Ascending aorta (tissue), 2 donors: ENCODE measurements at regions of chr13 and their contacts with region 1.

Region 1: DNA sequence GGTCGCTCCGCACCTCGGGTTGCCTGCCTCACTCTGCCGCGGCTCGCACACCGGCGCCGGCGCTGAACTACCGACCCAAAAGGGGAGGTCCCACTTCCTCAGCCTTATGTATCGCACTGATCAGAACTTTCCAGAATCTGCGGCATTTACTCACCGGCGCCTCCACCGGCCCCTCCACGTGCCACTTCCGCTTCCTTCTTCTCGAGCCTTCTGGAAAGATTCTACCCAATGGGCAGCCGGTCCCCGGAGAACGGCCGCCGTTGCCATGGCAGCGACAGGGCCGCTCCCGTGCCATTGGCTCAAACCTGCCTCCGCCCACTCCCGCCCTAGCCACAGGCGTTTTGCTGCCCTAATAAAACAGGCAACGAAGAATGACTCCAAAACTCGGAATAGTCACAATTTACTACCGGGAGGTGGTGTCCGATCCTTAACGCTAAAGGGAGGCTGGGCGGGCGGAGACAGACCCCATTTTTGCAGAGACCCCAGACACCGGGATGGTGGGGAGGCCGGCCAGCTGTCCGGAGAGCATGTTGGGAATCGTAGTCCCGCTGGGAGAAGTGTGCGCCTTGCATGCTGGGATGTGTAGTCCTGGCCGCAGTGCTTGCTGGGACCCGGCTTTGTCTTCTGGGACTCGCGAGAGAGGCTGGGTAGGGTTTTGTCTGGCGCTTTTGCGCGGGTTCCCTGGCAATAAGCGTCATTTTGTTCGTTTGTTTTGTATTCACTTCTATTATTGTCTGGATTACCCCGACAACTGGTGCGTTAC is at the start of gene HSPH1:
- DNase-seq: peak; percentile 95 to 99
- H3K4me3 ChIP-seq: peak within 1 kb of the TSS; percentile 80 to 91
- H3K27ac ChIP-seq: peak within 1 kb of the TSS; percentile 94 to 95
- H3K4me1 ChIP-seq: peaks cover 0 to 10% of the 10 kb centered on the region in 2 donors
- H3K27me3 ChIP-seq: no peaks in the 10 kb centered on the region
- CTCF ChIP-seq: peak in 2 of 3 experiments; percentile 24 to 26
- total RNA-seq, gene HSPH1: 20.6 TPM

Region 2: DNA sequence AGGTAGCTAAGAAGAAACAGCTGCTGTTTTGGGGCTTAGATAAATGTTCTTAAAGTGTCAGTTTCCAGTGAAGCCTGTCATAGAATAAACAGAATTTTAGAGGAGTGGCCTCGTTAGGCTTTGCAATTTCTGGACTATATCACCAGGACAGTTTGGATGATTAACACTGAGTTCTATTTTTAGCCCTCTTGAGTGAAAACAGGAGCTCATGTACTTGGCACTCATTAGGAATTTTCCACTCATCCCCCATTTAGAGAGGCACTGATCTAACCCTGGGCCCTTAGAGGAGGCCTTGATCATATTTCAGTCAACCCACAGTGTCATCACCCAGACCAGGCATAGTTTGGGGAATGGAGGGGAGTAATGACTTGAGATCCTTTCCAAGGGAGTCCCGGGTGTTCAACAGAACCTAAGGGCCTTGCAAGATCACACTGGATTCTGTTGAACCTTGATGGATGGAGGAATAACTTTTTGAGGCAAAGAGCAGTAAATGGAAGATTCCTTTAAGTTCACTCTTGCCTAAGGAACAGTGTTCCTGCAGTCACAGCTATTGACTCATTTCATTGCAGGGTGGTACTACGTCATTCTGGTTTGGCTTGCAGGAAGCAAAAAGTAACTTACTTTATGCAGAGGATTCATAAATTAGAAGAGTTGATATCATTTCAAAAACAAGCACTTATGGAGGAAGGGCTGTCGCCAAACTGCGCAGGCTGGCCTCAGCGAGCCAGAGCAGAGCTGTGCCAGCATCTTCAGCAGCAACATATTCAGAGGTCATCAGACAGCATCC is 1726.7 kb before region 1 on chr13:
- intact Hi-C with region 1: loop called (anchors 5 kb)
- DNase-seq: peak in 1 of 2 donors; percentile 63
- H3K4me3 ChIP-seq: no peak overlapping the region
- H3K27ac ChIP-seq: peak overlapping the region; percentile 88 to 90
- H3K4me1 ChIP-seq: peaks cover 22 to 59% of the 10 kb centered on the region in 2 donors
- H3K27me3 ChIP-seq: no peaks in the 10 kb centered on the region
- CTCF ChIP-seq: no peak

Region 3: DNA sequence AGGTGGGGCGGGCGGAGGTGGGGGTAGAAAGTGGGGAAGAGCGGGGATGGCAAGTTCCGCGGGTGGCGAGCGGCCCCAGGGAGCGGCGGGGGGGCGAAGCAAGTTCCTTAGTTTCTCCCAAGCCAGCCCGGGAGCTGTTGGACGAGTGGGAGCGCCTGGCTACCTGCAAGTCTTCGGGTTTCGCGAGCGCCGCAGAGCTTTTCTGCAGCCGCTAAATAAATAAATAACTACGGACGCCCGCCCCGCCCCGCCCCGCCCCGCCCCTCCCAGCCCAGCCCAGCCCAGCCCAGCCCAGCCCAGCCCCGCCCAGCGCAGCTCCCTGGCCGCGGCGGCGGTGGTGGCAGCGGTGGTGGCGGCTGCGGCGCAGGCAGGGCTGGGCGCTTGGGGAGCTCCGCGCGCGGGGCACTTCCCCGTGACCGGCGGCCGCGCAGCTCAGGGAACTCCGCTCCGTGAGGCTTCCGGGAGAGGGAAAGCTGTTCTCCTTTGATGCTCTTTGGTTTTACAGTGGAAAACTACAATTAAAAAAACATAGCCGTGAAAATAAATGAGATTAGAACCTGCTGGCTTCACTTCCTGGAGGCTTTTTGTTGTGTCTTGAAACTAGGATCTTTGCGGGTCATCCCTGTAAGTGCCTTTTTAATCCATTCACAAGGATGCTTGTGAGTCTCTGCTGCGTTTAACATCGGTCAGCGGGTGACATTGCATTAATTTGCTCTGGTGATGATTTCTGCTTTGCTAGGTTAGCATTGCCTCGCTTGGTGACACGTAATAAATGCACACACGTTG is 739.8 kb before region 1 on chr13 and contains the start of gene UBE2L5:
- intact Hi-C with region 1: loop called (anchors 2 kb)
- DNase-seq: peak; percentile 10 to 87
- H3K4me3 ChIP-seq: peak within 1 kb of the TSS; percentile 73 to 75
- H3K27ac ChIP-seq: peak within 1 kb of the TSS; percentile 95 to 98
- H3K4me1 ChIP-seq: peaks cover 8 to 12% of the 10 kb centered on the region in 2 donors
- H3K27me3 ChIP-seq: no peaks in the 10 kb centered on the region
- CTCF ChIP-seq: no peak
- total RNA-seq, gene UBE2L5: not detected

Region 4: GRCh38 chr13:30629527-30629926 is 532.5 kb before region 1 on chr13:
- intact Hi-C with region 1: no loop called
- DNase-seq: no peak
- H3K4me3 ChIP-seq: no peak overlapping the region
- H3K27ac ChIP-seq: no peak overlapping the region
- H3K4me1 ChIP-seq: peaks cover 0 to 4% of the 10 kb centered on the region in 2 donors
- H3K27me3 ChIP-seq: no peaks in the 10 kb centered on the region
- CTCF ChIP-seq: no peak

Region 5: GRCh38 chr13:30898678-30899241 is 263.2 kb before region 1 on chr13:
- intact Hi-C with region 1: loop called (anchors 5 kb)
- DNase-seq: peak; percentile 54 to 94
- H3K4me3 ChIP-seq: peak overlapping the region in 1 of 2 donors; percentile 42
- H3K27ac ChIP-seq: peak overlapping the region; percentile 98 to 99
- H3K4me1 ChIP-seq: peaks cover 24 to 52% of the 10 kb centered on the region in 2 donors
- H3K27me3 ChIP-seq: no peaks in the 10 kb centered on the region
- CTCF ChIP-seq: peak in 1 of 3 experiments; percentile 12

Region 6: DNA sequence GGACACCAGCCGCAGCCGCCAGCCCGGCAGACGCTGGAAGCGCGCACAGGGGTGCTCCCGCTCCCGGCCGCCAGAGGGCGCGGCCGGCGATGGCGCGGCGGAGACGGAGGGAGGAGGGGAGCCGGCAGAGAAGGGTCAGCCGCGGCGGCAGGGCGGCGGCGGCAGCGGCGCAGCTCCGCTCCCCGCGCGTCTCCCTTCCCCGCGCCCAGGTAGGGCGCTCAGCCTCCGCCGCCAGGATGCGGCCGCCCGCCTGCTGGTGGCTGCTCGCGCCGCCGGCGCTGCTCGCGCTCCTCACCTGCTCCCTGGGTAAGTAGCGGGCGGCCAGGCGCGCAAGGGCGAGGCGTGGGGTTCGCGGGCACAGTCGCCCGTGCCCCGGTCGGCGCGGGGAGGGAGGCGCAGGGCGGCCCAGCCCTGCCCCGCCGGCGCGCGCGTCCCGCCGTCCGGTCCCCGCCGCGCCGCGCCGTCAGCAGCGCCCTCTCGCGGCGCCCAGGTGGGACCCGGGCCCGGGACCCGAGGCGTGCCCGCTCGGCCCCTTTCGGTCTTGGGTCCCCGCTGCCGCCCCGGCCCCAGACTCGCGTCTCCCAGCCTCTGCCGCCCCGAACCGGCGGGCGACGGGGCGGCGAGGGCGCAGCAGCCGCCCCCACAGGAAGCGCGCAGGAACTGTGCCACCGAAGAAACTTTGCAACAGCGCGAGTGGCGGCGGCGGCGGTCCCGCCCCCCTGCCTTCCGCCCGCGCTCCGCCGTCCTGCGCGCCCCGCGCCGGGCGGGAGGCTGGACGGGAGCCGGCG is 38.0 kb after region 1 on chr13 and contains the start of gene B3GLCT:
- intact Hi-C with region 1: loop called (anchors 1 kb)
- DNase-seq: peak in 1 of 2 donors; percentile 88
- H3K4me3 ChIP-seq: peak within 1 kb of the TSS; percentile 88 to 97
- H3K27ac ChIP-seq: peak within 1 kb of the TSS; percentile 88 to 100
- H3K4me1 ChIP-seq: peaks cover 5 to 15% of the 10 kb centered on the region in 2 donors
- H3K27me3 ChIP-seq: no peaks in the 10 kb centered on the region
- CTCF ChIP-seq: peak; percentile 58 to 96 (median 77)
- total RNA-seq, gene B3GLCT: 8.8 TPM

Region 7: DNA sequence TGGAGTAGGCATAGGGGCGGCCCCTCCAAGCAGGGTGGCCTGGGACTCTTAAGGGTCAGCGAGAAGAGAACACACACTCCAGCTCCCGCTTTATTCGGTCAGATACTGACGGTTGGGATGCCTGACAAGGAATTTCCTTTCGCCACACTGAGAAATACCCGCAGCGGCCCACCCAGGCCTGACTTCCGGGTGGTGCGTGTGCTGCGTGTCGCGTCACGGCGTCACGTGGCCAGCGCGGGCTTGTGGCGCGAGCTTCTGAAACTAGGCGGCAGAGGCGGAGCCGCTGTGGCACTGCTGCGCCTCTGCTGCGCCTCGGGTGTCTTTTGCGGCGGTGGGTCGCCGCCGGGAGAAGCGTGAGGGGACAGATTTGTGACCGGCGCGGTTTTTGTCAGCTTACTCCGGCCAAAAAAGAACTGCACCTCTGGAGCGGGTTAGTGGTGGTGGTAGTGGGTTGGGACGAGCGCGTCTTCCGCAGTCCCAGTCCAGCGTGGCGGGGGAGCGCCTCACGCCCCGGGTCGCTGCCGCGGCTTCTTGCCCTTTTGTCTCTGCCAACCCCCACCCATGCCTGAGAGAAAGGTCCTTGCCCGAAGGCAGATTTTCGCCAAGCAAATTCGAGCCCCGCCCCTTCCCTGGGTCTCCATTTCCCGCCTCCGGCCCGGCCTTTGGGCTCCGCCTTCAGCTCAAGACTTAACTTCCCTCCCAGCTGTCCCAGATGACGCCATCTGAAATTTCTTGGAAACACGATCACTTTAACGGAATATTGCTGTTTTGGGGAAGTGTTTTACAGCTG is 1153.4 kb after region 1 on chr13 and contains the starts of genes BRCA2 and ZAR1L:
- intact Hi-C with region 1: loop called (anchors 10 kb)
- DNase-seq: peak; percentile 54 to 95
- H3K4me3 ChIP-seq: peak within 1 kb of the TSS; percentile 61 to 78
- H3K27ac ChIP-seq: peak within 1 kb of the TSS; percentile 94 to 98
- H3K4me1 ChIP-seq: peaks cover 0 to 2% of the 10 kb centered on the region in 2 donors
- H3K27me3 ChIP-seq: no peaks in the 10 kb centered on the region
- CTCF ChIP-seq: no peak
- total RNA-seq, gene BRCA2: 0.64 TPM
- total RNA-seq, gene ZAR1L: not detected